ENCODE measurements at regions of chr16 and their contacts with region 1.

Region 1: DNA sequence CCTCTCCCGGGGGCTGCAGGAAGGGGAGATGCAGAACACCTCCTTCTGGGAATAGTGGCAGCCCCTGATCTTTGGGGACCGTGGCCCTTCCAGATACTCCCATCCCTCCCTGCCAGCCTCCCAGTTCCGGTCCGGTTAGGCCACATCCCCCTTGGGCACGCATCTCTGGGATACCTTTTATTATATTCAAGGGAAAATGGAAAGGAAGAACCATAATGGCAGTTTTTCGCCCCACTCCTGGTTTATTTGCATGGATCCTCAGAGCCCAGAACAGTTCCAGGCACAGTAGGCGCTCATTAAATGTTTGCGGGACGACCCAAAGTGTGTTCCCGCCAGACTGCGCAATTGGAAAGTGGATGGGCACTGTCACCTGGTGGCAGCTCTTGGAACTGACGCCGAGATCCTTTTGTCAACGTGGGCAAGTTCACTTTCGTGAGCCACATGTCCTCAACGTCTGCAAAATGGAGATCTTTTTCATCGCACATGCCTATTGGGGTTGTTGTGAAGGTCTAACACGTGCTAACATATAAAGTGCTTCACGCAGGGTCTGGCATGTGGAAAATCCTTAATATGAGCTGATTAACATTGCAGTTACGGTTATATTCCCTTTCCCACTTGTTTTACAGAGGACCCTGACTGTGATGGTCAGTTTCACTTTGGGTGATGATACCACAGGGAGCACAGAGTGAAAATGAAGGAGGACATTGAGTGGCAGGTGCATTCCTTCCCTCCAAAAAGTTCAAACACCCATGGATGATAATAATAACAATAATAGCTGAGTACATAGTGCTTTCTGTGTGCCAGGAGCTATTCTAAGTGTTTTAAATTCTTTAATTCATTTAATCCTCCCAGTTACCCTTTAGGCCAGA is 1.7 kb upstream of the GPRC5B start:
- DNase-seq: peak; percentile 70
- H3K4me3 ChIP-seq: peak overlapping the region in 1 of 2 experiments; percentile 39; a peak in 2 of 4 replicates
- H3K27ac ChIP-seq: no peak overlapping the region
- H3K4me1 ChIP-seq: peaks cover 0 to 3% of the 10 kb centered on the region in 2 experiments; a peak in 1 of 4 replicates
- H3K27me3 ChIP-seq: no peaks in the 10 kb centered on the region
- CTCF ChIP-seq: peak; percentile 99
- EP300 ChIP-seq: no peak
- RAD21 ChIP-seq: peak; percentile 98

Region 2: DNA sequence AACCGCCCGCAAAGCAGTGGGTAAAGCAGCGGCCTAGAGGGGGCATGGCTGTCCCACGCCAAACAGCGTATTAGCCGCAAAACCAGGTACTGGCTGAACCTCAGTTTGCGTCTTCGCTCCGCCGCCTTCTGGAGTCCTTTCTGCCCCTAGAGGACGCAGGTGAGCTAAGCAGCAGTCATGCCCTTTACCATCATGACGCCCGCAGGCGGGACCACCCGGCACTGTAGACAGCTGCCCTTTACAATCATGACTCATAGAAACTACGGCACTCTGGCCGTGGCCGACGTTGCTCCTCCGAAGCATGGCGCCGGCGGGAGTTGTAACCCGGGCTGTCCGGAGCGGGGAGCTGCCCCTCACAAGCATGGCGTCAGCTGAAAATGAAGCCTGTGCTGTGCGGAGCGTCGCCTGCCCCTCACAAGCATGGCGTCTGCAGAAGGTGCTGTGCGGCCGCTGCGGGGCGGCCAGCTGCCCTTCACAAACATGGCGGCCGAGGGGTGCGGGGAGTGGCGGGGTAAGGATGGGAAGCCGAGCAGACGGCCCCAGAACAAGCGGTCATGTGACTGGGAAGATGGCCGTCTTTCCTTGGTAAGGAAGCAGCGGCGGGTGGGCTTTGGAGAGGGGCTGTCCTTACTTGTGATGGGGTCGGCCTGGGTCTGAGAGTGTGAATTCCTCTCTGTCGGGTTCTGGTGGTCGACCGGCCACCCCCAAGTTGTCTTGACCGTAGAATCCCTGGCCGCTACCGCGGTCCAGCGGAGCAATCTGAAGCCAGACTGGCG is 331.0 kb before region 1 on chr16 and contains the start of gene VPS35L:
- CTCF ChIA-PET with region 1: interaction called, 12 read pairs
- POLR2A ChIA-PET with region 1: interaction called, 3 read pairs
- DNase-seq: peak; percentile 93
- H3K4me3 ChIP-seq: peak within 1 kb of the TSS; percentile 73 to 86
- H3K27ac ChIP-seq: peak within 1 kb of the TSS; percentile 88 to 91
- H3K4me1 ChIP-seq: peaks cover 0 to 4% of the 10 kb centered on the region in 2 experiments; a peak in 1 of 4 replicates
- H3K27me3 ChIP-seq: no peaks in the 10 kb centered on the region
- CTCF ChIP-seq: peak; percentile 68
- EP300 ChIP-seq: no peak
- RAD21 ChIP-seq: peak; percentile 22; the same call in 1 of the 2 replicates
- polyA plus RNA-seq, gene VPS35L: 24.8 and 35.3 TPM in 2 replicates

Region 3: GRCh38 chr16:19583665-19584300 is 302.5 kb before region 1 on chr16:
- CTCF ChIA-PET with region 1: interaction called, 17 read pairs
- POLR2A ChIA-PET with region 1: no interaction called
- DNase-seq: peak; percentile 51
- H3K4me3 ChIP-seq: no peak overlapping the region
- H3K27ac ChIP-seq: no peak overlapping the region
- H3K4me1 ChIP-seq: no peaks in the 10 kb centered on the region
- H3K27me3 ChIP-seq: no peaks in the 10 kb centered on the region
- CTCF ChIP-seq: peak; percentile 69
- EP300 ChIP-seq: no peak
- RAD21 ChIP-seq: peak; percentile 57

Region 4: GRCh38 chr16:19601083-19601976 is 285.0 kb before region 1 on chr16:
- CTCF ChIA-PET with region 1: interaction called, 87 read pairs
- POLR2A ChIA-PET with region 1: interaction called, 3 read pairs
- DNase-seq: peak; percentile 47
- H3K4me3 ChIP-seq: peak overlapping the region in 1 of 2 experiments; percentile 25; a peak in 1 of 4 replicates
- H3K27ac ChIP-seq: no peak overlapping the region
- H3K4me1 ChIP-seq: no peaks in the 10 kb centered on the region
- H3K27me3 ChIP-seq: no peaks in the 10 kb centered on the region
- CTCF ChIP-seq: peak; percentile 75
- EP300 ChIP-seq: no peak
- RAD21 ChIP-seq: peak; percentile 82

Region 5: DNA sequence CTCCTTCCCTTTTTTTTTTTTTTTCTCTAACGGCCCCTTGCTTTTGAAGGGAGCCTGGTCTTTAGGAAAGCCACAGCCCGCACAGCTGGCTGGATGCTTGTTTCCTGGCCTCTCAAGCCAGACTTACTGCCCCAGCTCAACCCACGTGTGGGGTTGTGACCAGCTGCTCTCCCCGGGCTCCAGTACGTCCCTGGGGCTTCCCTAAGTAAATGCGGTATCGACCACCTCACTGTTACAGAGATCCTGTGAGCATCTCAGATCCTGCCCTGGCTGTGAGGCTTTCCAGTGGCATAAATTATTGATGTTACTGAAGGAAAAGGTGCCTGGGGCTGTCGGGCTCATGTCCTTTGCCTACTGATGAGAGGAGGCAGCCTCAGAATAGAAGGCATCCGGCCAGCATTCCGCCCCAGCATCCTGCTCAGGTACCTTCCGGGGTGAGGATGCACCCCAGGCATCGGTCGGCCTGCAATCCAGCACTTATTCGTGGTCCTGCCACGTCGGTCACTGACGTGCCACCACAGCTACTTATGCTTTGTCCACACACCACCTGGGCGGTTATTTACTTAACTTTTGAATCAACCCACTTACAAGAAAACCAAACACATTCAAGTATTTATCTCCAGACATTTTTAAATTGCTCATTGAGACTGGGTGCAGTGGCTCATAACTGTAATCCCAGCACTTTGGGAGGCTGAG is 11.3 kb before region 1 on chr16:
- CTCF ChIA-PET with region 1: interaction called, 10 read pairs
- POLR2A ChIA-PET with region 1: no interaction called
- DNase-seq: no peak
- H3K4me3 ChIP-seq: no peak overlapping the region
- H3K27ac ChIP-seq: no peak overlapping the region
- H3K4me1 ChIP-seq: no peaks in the 10 kb centered on the region; a peak in 1 of 4 replicates
- H3K27me3 ChIP-seq: no peaks in the 10 kb centered on the region
- CTCF ChIP-seq: no peak
- EP300 ChIP-seq: no peak
- RAD21 ChIP-seq: no peak

Region 6: DNA sequence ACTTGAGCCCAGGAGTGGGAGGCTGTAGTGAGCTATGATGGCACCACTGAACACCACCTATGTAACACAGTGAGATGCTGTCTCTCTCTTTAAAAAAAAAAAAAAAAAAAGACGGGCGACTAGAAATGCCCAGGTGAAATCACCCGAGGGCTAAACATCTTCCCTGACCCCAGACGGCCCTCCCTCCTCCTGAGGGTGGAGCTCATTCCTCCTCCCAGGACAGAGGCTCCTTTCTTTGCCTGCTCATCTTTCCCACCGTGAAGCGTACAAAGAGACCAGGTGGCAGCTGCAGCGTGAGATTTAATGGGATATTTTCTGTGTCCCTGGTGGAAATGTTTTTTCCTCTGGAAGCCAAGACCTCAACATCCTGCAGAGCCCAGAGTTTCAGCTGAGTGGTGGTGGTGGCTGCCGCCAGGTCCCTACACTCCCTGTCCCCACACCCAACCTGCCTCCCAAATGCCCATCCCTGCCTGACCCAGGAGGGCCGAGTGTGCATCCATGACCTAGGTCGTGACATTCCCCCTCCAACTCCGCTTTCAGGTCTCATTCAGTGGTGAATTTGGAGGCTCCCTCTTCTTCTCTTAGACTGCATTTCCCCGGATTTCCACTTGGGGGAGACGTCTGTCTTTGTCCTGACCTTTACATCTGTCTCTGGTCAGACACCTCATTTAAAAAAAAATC is 12.8 kb after region 1 on chr16:
- CTCF ChIA-PET with region 1: interaction called, 12 read pairs
- POLR2A ChIA-PET with region 1: no interaction called
- DNase-seq: peak; percentile 64
- H3K4me3 ChIP-seq: no peak overlapping the region; a peak in 1 of 4 replicates
- H3K27ac ChIP-seq: no peak overlapping the region
- H3K4me1 ChIP-seq: no peaks in the 10 kb centered on the region; a peak in 1 of 4 replicates
- H3K27me3 ChIP-seq: no peaks in the 10 kb centered on the region; the same call in 1 of the 2 replicates
- CTCF ChIP-seq: peak; percentile 76
- EP300 ChIP-seq: no peak
- RAD21 ChIP-seq: peak; percentile 80

Region 7: DNA sequence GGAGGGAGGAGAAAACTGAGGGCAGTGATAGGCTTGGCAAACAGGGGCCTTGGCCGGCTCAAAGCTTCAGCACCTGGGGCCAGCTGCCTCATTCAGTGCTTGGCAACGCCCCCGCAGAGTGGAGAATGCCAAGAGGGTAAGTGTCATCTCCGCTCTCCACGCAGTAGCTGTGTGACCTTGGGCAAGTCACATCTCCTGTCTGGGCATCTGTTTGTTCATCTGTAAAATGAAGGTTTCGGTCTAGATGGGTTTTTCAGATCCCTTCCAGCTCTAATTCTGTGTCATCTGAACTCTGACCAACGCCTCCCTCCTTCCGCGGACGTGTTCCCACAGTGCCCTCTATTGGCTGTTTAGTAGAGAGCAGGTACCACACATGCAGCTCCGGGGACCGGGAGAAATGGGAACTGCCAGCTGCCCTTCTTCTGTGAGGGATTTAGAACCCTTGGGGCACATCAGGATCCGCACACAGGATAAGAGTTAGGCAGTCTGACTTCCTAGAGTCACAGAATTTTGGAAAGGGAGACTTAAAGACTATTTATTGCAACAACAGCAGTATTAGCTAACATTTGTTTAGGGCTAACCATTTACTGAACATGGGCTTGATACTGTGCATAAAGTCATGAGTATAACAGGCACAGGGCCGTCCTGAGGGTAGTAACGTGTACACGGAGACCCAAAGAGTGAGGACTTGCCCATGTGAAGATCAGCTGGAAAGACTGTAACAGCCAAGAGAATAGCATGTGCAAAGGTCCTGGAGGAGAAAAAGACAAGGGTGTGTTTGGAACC is 414.2 kb after region 1 on chr16:
- CTCF ChIA-PET with region 1: interaction called, 14 read pairs
- POLR2A ChIA-PET with region 1: no interaction called
- DNase-seq: peak; percentile 67
- H3K4me3 ChIP-seq: peak overlapping the region in 1 of 2 experiments; percentile 12; a peak in 1 of 4 replicates
- H3K27ac ChIP-seq: no peak overlapping the region
- H3K4me1 ChIP-seq: no peaks in the 10 kb centered on the region; a peak in 1 of 4 replicates
- H3K27me3 ChIP-seq: no peaks in the 10 kb centered on the region
- CTCF ChIP-seq: peak; percentile 77
- EP300 ChIP-seq: no peak
- RAD21 ChIP-seq: peak; percentile 81